Aorta (tissue), 5 donors: ENCODE measurements at regions of chr10 and their contacts with region 1.

Region 1: DNA sequence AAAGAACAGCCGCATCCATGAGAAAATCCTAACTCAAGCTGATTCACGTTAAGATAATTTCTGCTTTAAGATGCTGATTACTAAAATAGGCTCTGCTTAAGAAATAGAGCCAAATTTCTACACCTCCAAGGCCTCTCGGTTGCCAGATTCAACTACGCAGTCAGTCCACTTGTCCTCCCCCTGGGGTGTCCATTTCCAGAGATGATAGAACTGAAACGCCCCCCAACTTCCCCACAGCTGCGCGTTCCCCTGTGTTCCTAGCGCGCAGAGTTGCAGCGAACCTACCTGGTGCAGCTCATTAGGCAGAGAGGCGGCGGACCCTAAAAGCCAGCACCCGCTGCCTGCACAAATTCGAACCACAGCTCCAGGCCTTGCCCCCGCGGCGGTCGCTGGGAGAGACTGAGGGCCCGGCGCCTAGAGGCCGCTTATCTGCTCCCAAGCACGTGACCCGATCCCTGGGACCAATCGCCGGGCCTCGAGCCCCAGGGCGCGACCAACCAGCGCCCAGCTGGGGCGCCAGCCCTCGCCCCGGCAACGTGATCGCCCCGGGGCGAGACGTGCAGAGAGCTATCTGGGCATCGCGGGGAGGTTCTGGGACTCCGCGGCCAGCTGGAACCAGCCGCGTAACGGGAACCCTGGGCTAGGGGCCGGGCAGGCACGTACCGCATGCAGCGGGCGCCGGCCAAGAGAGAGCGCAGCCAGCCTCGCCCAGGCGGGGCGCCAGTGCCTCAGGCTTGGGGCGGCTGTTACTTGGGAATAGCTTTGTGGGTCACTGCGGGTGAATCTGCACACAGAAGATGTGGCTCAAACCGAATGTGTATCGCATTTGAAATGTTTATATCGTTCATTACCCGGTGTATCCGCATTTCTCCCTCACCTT is at the start of gene PPP1R3C:
- DNase-seq: peak; percentile 96
- ATAC-seq: peak; percentile 95
- H3K4me3 ChIP-seq: peak within 1 kb of the TSS; percentile 67 to 71
- H3K27ac ChIP-seq: peak within 1 kb of the TSS; percentile 23 to 69
- H3K4me1 ChIP-seq: no peaks in the 10 kb centered on the region
- H3K27me3 ChIP-seq: no peaks in the 10 kb centered on the region
- total RNA-seq, gene PPP1R3C: 94.6 to 152 TPM

Region 2: DNA sequence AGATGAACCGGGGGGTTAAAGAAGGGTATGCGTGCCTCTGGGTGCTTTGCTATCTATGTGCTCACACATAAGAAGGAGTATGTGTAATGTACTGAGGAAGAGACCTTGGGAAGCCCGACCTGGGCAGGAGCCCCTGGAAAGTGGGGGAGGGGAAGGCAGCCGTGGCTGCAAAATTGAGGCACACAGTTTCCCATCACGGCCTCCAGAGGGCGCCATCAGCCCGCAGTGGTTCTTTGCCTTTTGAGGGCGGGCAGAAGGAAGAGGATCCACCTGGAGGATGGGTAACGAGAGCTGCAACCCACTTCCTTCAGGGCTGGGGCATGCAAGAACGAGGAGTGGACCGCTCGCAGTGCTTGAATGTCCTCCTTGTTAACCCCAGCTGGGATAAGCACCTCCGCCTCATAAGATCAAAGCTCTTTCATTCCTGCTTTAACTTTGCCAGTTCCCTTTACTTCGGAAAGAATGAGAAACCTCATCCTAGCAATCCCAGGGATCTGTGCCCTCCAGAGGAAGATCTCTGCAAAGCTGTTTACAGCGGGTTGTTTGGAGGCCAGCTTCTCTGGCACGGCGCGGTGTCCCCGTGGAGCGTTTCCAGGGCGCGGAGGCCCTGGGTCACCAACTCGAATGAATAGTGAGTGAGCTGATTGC is 334.6 kb before region 1 on chr10:
- intact Hi-C with region 1: loop called in 1 of 2 experiments (anchors 5 kb)
- DNase-seq: peak; percentile 82 to 93
- ATAC-seq: peak; percentile 92
- H3K4me3 ChIP-seq: peak overlapping the region; percentile 44 to 50
- H3K27ac ChIP-seq: no peak overlapping the region
- H3K4me1 ChIP-seq: no peaks in the 10 kb centered on the region
- H3K27me3 ChIP-seq: no peaks in the 10 kb centered on the region

Region 3: GRCh38 chr10:91389636-91390512 is 243.0 kb before region 1 on chr10:
- intact Hi-C with region 1: loop called in 1 of 2 experiments (anchors 10 kb)
- DNase-seq: no peak
- ATAC-seq: peak; percentile 84
- H3K4me3 ChIP-seq: no peak overlapping the region
- H3K27ac ChIP-seq: no peak overlapping the region
- H3K4me1 ChIP-seq: no peaks in the 10 kb centered on the region
- H3K27me3 ChIP-seq: peaks cover 0 to 1% of the 10 kb centered on the region in 2 donors

Region 4: GRCh38 chr10:91493313-91493712 is 139.6 kb before region 1 on chr10:
- intact Hi-C with region 1: loop called (anchors 2 to 5 kb)
- DNase-seq: no peak
- ATAC-seq: no peak
- H3K4me3 ChIP-seq: no peak overlapping the region
- H3K27ac ChIP-seq: no peak overlapping the region
- H3K4me1 ChIP-seq: no peaks in the 10 kb centered on the region
- H3K27me3 ChIP-seq: no peaks in the 10 kb centered on the region

Region 5: GRCh38 chr10:91541481-91541880 is 91.4 kb before region 1 on chr10:
- intact Hi-C with region 1: no loop called
- DNase-seq: no peak
- ATAC-seq: no peak
- H3K4me3 ChIP-seq: no peak overlapping the region
- H3K27ac ChIP-seq: no peak overlapping the region
- H3K4me1 ChIP-seq: no peaks in the 10 kb centered on the region
- H3K27me3 ChIP-seq: no peaks in the 10 kb centered on the region

Region 6: GRCh38 chr10:91551856-91552255 is 81.1 kb before region 1 on chr10:
- intact Hi-C with region 1: loop called (anchors 2 to 5 kb)
- DNase-seq: no peak
- ATAC-seq: peak; percentile 83
- H3K4me3 ChIP-seq: no peak overlapping the region
- H3K27ac ChIP-seq: no peak overlapping the region
- H3K4me1 ChIP-seq: no peaks in the 10 kb centered on the region
- H3K27me3 ChIP-seq: no peaks in the 10 kb centered on the region

Region 7: DNA sequence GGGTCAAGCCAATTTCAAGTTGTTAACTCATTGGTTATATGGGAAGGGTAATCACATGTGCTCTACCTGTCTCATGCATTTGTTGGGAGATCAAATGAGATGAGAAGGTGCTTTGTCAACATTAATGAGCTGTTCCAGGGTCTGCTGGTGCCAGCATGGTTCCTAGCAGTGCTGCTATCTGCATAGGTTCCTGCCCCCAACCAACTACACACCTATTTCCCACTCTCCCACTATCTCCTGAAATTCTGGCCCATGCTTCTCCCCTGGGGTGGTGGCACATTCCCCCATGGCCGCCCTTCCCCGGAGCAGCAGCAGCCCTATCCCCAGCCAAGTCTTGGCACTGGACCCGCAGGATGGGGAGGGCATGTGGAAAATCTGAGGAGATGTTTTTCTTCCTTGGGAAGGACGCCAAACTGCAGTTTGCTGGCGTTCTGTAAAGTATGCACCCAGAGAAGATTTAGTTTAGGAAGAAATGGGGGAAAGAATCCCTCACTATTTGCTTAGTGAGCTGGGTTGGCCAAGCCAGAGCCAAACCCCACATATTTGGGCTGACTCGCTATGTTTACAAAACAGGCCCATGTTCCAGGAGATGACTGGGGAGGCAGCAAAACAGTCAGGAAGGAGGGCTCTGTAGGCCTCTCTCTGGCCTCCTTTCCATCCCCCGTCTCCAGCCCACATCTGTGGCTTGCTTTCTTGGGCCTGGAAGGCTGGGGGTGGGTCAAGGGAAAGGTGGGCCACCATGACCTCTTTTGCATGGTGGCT is 42.6 kb before region 1 on chr10:
- intact Hi-C with region 1: loop called (anchors 2 to 5 kb)
- DNase-seq: peak; percentile 91 to 92
- ATAC-seq: peak; percentile 80
- H3K4me3 ChIP-seq: no peak overlapping the region
- H3K27ac ChIP-seq: peak overlapping the region; percentile 98
- H3K4me1 ChIP-seq: peaks cover 7 to 35% of the 10 kb centered on the region in 2 donors
- H3K27me3 ChIP-seq: no peaks in the 10 kb centered on the region

Region 8: DNA sequence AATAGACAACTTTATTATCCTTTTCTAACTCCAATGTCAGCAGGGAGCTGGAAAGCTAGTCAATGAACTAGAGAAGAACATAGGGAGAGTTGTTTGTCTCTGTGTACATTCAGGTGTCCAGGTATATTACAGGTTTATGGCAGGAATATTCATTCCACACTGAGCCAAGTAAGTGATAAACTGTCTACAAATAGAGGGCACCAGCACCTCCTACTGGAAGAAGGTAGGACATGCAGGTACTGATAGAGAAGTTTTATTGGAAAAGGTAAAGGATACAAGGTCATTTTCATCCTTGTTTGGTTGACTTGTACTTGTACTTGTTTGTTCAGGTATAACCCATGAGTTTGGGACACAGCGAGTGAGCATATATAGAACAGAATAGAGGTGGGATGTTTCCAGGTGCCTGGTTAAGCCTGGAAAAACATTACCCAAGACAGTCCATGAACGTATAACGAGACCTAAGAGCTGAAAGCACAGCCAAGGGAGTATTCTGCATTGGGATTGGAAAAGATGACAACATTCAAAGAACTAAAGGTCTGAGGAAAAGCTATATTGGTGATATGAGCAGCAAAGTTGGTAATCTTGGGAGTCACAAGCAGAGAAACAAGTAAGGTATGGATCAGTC is 61.4 kb after region 1 on chr10:
- intact Hi-C with region 1: loop called in 1 of 2 experiments (anchors 5 kb)
- DNase-seq: no peak
- ATAC-seq: no peak
- H3K4me3 ChIP-seq: no peak overlapping the region
- H3K27ac ChIP-seq: no peak overlapping the region
- H3K4me1 ChIP-seq: peaks cover 3 to 4% of the 10 kb centered on the region in 2 donors
- H3K27me3 ChIP-seq: no peaks in the 10 kb centered on the region